CD8-positive, alpha-beta T cell (primary cell): ENCODE measurements at regions of chr12 and their contacts with region 1.

Region 1: DNA sequence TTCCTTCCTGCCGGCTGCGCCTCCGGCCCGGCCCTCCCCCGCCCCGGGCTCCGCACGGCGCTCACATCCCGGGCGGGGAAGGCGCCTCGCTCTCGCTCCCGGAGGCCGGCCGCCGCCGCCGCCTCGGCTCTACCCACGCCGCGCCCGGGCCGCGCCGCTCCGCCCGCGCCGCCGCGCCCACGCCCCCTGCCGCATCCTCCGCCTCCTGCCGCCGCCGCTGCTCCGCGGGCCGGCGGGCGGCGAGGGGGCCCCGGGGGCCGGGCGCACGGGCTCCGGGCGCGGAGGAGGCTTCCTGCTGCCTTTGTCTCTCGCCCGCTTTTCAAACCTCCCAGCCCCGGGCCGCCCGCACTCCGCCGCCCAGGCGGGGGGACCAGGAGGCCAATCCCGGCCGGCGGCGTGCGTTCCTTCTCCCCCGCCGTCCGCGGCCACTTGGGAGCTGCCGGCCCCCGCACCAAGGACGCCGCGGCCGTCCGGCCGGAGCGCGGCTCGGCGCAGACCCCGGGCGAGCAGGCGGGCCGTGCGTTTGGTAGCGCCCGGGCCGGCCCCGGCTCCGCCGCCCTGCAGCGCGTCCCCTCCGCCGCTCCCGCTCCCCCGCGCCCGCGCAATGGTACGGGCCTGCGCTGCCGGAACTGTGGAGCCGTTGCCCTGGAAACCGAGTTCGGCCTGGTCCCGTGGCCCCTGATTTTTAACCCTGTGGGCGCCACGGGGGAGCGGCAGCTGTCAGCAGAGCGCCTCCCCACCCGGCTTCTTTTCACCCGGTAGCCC is at the start of gene FBXL14:
- DNase-seq: peak; percentile 84 to 96 (median 92)
- ATAC-seq: peak; percentile 59
- H3K4me3 ChIP-seq: peak within 1 kb of the TSS; percentile 68 to 83
- H3K4me3 Mint-ChIP-seq: peak within 1 kb of the TSS; percentile 92
- H3K27ac ChIP-seq: peak within 1 kb of the TSS; percentile 81 to 86
- H3K27ac Mint-ChIP-seq: peak within 1 kb of the TSS; percentile 92
- H3K4me1 ChIP-seq: peaks cover 37% of the 10 kb centered on the region
- H3K4me1 Mint-ChIP-seq: peaks cover 53% of the 10 kb centered on the region
- H3K27me3 ChIP-seq: no peaks in the 10 kb centered on the region
- H3K27me3 Mint-ChIP-seq: no peaks in the 10 kb centered on the region
- CTCF ChIP-seq: no peak
- total RNA-seq, gene FBXL14: 28.1 to 30.5 TPM

Region 2: GRCh38 chr12:401235-402028 is 1193.0 kb before region 1 on chr12 and contains the start of gene CCDC77:
- CTCF ChIA-PET with region 1: no interaction called
- POLR2A ChIA-PET with region 1: no interaction called
- intact Hi-C with region 1: loop called in 1 of 2 experiments (anchors 5 kb)
- DNase-seq: peak; percentile 87 to 96 (median 92)
- ATAC-seq: peak; percentile 100
- H3K4me3 ChIP-seq: peak within 1 kb of the TSS; percentile 81 to 96
- H3K4me3 Mint-ChIP-seq: no peak within 1 kb of the TSS
- H3K27ac ChIP-seq: peak within 1 kb of the TSS; percentile 43 to 69
- H3K27ac Mint-ChIP-seq: no peak within 1 kb of the TSS
- H3K4me1 ChIP-seq: peaks cover 10% of the 10 kb centered on the region
- H3K4me1 Mint-ChIP-seq: no peaks in the 10 kb centered on the region
- H3K27me3 ChIP-seq: no peaks in the 10 kb centered on the region
- H3K27me3 Mint-ChIP-seq: no peaks in the 10 kb centered on the region
- CTCF ChIP-seq: peak; percentile 40
- total RNA-seq, gene CCDC77: 2.8 to 5.2 TPM

Region 3: DNA sequence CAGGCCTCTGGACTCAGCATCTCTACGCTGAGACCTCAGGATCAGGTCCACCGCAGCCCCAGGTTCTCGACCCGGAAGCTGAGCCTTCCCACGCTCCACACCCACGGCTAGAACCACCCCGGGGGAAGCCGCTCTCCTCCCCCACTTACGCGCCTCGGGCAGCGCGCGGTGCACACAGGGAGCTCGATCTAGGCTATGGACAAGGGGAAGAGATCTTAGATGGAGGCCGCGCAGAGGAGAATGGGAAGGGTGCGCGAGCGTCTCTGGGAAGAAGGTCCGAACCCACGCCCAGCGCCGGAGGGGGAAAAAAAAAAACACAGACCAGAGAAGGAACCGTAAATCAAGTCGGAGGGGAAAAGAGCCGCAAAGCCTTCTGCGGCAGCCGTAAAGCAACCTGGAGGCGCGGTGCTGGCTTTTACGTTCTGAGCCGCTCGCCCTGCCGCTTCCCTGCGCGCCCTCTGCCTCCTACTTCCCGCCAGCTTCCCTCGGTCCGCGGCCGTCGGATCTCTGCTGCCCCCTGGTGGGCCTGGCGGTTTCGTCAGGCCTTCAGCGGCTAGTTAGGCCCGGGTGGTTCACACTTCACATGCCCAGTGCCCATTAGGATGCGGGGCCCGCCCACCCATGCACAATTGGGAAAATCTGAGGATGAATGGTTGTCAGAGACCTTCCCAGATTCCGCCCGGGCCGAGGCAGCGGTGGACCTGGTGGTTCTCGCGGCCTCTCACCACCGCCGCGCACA is 644.8 kb before region 1 on chr12 and contains the start of gene RAD52:
- CTCF ChIA-PET with region 1: no interaction called
- POLR2A ChIA-PET with region 1: no interaction called
- intact Hi-C with region 1: loop called (anchors 5 kb)
- DNase-seq: peak; percentile 93 to 99 (median 98)
- ATAC-seq: peak; percentile 91
- H3K4me3 ChIP-seq: peak within 1 kb of the TSS; percentile 92 to 98
- H3K4me3 Mint-ChIP-seq: peak within 1 kb of the TSS; percentile 94
- H3K27ac ChIP-seq: peak within 1 kb of the TSS; percentile 70 to 81
- H3K27ac Mint-ChIP-seq: peak within 1 kb of the TSS; percentile 92
- H3K4me1 ChIP-seq: peaks cover 6% of the 10 kb centered on the region
- H3K4me1 Mint-ChIP-seq: peaks cover 26% of the 10 kb centered on the region
- H3K27me3 ChIP-seq: no peaks in the 10 kb centered on the region
- H3K27me3 Mint-ChIP-seq: no peaks in the 10 kb centered on the region
- CTCF ChIP-seq: peak; percentile 94
- total RNA-seq, gene RAD52: 8.1 to 9.6 TPM

Region 4: DNA sequence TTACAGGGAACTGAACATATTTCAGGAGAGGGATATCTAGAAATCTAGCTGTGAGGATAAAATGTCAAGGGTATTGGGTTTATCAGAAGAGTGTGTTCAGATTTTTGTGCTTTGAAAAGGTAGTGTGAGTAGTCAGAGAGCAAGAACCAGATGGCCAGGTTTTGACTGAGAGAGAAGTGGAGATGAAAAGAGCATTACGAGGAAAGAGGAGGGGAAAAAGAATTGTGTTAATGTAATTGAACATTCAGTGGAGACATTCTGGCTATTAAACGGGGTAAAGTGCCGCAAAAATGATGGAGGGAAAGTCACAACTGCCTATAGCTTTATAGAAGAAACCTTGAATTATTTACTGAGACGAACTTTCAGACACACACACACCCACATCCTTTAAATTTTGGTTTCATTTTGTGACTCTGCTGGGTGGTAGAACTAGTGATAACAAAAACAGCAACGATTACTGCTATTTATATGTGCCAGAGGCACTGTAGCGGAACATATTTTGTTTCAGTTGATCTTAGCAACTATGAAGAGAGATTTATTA is 389.8 kb before region 1 on chr12:
- CTCF ChIA-PET with region 1: no interaction called
- POLR2A ChIA-PET with region 1: interaction called, 5 read pairs
- intact Hi-C with region 1: loop called (anchors 10 kb)
- DNase-seq: peak in 2 of 9 experiments; percentile 39 to 59
- ATAC-seq: peak; percentile 95
- H3K4me3 ChIP-seq: peak overlapping the region; percentile 38 to 55
- H3K4me3 Mint-ChIP-seq: no peak overlapping the region
- H3K27ac ChIP-seq: peak overlapping the region; percentile 50 to 65
- H3K27ac Mint-ChIP-seq: no peak overlapping the region
- H3K4me1 ChIP-seq: peaks cover 9% of the 10 kb centered on the region
- H3K4me1 Mint-ChIP-seq: peaks cover 10% of the 10 kb centered on the region
- H3K27me3 ChIP-seq: no peaks in the 10 kb centered on the region
- H3K27me3 Mint-ChIP-seq: no peaks in the 10 kb centered on the region
- CTCF ChIP-seq: no peak

Region 5: GRCh38 chr12:1583421-1584078 is 10.9 kb before region 1 on chr12:
- CTCF ChIA-PET with region 1: interaction called, 35 read pairs
- POLR2A ChIA-PET with region 1: interaction called, 12 read pairs
- intact Hi-C with region 1: no loop called
- DNase-seq: peak in 8 of 9 experiments; percentile 45 to 88 (median 67)
- ATAC-seq: peak; percentile 82
- H3K4me3 ChIP-seq: no peak overlapping the region
- H3K4me3 Mint-ChIP-seq: peak overlapping the region; percentile 20
- H3K27ac ChIP-seq: no peak overlapping the region
- H3K27ac Mint-ChIP-seq: no peak overlapping the region
- H3K4me1 ChIP-seq: peaks cover 20% of the 10 kb centered on the region
- H3K4me1 Mint-ChIP-seq: peaks cover 21% of the 10 kb centered on the region
- H3K27me3 ChIP-seq: no peaks in the 10 kb centered on the region
- H3K27me3 Mint-ChIP-seq: no peaks in the 10 kb centered on the region
- CTCF ChIP-seq: peak; percentile 98

Region 6: GRCh38 chr12:1804545-1805332 is 210.3 kb after region 1 on chr12:
- CTCF ChIA-PET with region 1: no interaction called
- POLR2A ChIA-PET with region 1: no interaction called
- intact Hi-C with region 1: loop called in 1 of 2 experiments (anchors 2 kb)
- DNase-seq: peak; percentile 69 to 93 (median 87)
- ATAC-seq: peak; percentile 97
- H3K4me3 ChIP-seq: no peak overlapping the region
- H3K4me3 Mint-ChIP-seq: no peak overlapping the region
- H3K27ac ChIP-seq: peak overlapping the region in 1 of 2 experiments; percentile 66
- H3K27ac Mint-ChIP-seq: peak overlapping the region; percentile 73
- H3K4me1 ChIP-seq: peaks cover 6% of the 10 kb centered on the region
- H3K4me1 Mint-ChIP-seq: peaks cover 10% of the 10 kb centered on the region
- H3K27me3 ChIP-seq: no peaks in the 10 kb centered on the region
- H3K27me3 Mint-ChIP-seq: no peaks in the 10 kb centered on the region
- CTCF ChIP-seq: no peak